Gastrocnemius medialis (tissue), 4 donors: ENCODE measurements at regions of chr11 and their contacts with region 1.

Region 1: DNA sequence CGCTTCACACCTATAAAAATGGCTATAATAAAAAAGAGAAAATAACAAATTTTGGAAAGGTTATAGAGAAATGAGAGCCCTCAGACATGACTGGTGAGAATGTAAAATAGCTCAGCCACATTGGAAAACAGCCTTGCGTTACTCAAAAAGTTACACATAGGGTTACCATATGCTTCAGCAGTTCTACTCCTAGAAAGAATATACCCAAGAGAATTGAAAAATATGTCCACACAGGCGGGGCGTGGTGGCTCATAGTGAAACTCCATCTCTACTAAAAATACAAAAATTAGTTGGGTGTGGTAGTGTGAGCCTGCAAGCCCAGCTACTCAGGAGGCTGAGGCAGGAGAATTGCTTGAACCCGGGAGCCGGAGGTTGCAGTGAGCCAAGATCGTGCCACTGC is 7.6 kb upstream of the JHY start:
- DNase-seq: no peak
- ATAC-seq: no peak
- H3K4me3 ChIP-seq: no peak overlapping the region
- H3K27ac ChIP-seq: no peak overlapping the region
- H3K4me1 ChIP-seq: no peaks in the 10 kb centered on the region
- H3K27me3 ChIP-seq: peaks cover 2 to 11% (median 6%) of the 10 kb centered on the region in 3 donors
- CTCF ChIP-seq: no peak
- POLR2A ChIP-seq: no peak

Region 2: GRCh38 chr11:123006860-123007542 is 132.0 kb after region 1 on chr11:
- in situ Hi-C with region 1: loop called in 1 of 4 experiments (anchors 5 kb)
- intact Hi-C with region 1: no loop called
- DNase-seq: no peak
- ATAC-seq: no peak
- H3K4me3 ChIP-seq: no peak overlapping the region
- H3K27ac ChIP-seq: no peak overlapping the region
- H3K4me1 ChIP-seq: no peaks in the 10 kb centered on the region
- H3K27me3 ChIP-seq: peaks cover 0 to 3% (median 0%) of the 10 kb centered on the region in 3 donors
- CTCF ChIP-seq: no peak
- POLR2A ChIP-seq: no peak